Activated T-helper 1 cell treated with anti-CD3 and anti-CD28 coated beads, Interleukin-12 subunit alpha, Interleukin-12 subunit beta, Interleukin-2, Interleukin-4 antibody, amounts not matched to agents 30 ng/mL and 10 ng/mL and 1 ng/mL, durations not matched to agents 14 hours and 24 hours and 36 hours (primary cell): ENCODE measurements at regions of chr3 and their contacts with region 1.

Region 1: DNA sequence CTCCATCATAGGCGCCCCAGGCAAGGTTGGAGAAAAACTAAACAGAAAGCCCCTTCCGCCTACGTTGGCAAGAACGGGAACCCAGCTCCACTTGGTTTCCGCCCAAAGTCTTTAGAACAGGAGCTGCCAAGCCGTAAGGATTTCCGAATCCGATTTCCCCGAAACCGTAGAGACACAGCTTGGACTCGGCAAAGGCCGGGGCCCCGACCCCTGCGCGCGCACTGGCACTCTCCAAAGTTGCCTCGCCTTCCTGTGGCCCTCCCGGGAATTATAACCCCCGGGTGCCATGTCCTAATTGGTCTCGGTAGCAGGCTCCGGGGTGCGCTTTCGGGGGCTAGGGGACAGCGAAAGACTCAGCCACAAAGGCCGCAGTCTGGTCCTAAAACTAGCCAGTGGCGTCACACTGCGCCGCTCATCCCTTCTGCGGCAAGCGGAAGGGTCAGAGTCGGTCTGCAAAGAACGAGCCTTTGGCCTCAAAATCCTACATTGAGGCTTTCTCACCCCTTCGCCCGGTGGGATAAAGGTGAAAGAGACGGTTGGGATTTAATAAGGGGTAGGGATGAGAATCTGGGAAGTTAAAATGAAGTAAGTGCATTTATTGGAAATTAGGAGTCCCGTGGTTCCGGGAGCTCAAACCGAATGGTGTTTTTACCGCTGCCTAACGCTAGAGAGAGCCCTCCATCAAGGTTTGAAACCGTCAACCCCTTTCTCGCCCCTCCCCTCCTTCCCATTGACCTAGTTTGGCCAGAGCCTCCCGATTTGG is 6.8 kb downstream of the BCL6 start:
- DNase-seq: peak; percentile 67
- H3K4me3 Mint-ChIP-seq: peak overlapping the region; percentile 96
- H3K27ac Mint-ChIP-seq: peak overlapping the region; percentile 92
- H3K4me1 Mint-ChIP-seq: peaks cover 71% of the 10 kb centered on the region
- H3K27me3 Mint-ChIP-seq: no peaks in the 10 kb centered on the region

Region 2: GRCh38 chr3:188202358-188203138 is 464.0 kb after region 1 on chr3:
- intact Hi-C with region 1: loop called (anchors 5 kb)
- DNase-seq: peak; percentile 8
- H3K4me3 Mint-ChIP-seq: no peak overlapping the region
- H3K27ac Mint-ChIP-seq: no peak overlapping the region
- H3K4me1 Mint-ChIP-seq: peaks cover 28% of the 10 kb centered on the region
- H3K27me3 Mint-ChIP-seq: no peaks in the 10 kb centered on the region

Region 3: DNA sequence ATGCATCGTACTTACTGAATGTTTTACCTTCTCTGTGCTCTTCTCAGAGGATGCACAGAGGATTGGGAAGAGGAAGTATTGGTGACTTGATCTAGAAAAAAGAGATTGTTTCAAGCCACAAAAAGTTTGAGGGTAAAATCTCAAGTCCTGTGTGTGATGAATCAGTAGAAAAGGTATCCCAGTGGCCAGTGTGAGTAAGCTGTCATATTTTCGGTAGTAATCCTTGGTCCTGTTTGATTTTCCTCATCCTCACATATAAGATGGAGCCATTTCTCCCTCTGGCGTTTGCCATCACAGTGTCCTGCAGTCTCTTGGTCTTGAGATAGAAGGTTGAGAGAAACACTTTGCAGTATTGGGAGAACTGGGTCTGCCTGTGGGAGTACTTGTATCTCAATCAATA is 582.2 kb after region 1 on chr3:
- intact Hi-C with region 1: loop called (anchors 1 kb)
- DNase-seq: no peak
- H3K4me3 Mint-ChIP-seq: no peak overlapping the region
- H3K27ac Mint-ChIP-seq: no peak overlapping the region
- H3K4me1 Mint-ChIP-seq: peaks cover 49% of the 10 kb centered on the region
- H3K27me3 Mint-ChIP-seq: peaks cover 1% of the 10 kb centered on the region

Region 4: DNA sequence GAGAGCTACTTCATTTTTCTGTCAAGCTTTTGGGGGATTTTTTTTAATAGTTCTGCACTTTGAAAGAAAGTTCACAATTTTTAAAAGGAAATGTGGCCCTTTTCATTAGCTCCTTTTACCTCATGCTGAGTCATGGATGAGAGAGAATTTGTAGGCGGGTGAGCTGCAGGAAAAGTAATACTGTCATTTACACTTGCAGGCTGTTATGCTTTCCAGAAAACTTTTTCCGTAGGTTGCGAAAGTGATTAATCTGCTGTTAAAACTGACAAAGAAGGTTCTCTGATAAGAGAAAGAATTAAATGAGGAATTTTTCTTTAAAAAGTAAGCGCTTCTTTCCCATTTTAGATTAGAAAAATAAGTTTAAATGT is 845.6 kb after region 1 on chr3:
- intact Hi-C with region 1: loop called (anchors 2 kb)
- DNase-seq: no peak
- H3K4me3 Mint-ChIP-seq: no peak overlapping the region
- H3K27ac Mint-ChIP-seq: no peak overlapping the region
- H3K4me1 Mint-ChIP-seq: no peaks in the 10 kb centered on the region
- H3K27me3 Mint-ChIP-seq: no peaks in the 10 kb centered on the region

Region 5: GRCh38 chr3:188788621-188789081 is 1050.1 kb after region 1 on chr3:
- intact Hi-C with region 1: loop called (anchors 1 kb)
- DNase-seq: peak; percentile 49
- H3K4me3 Mint-ChIP-seq: no peak overlapping the region
- H3K27ac Mint-ChIP-seq: no peak overlapping the region
- H3K4me1 Mint-ChIP-seq: peaks cover 6% of the 10 kb centered on the region
- H3K27me3 Mint-ChIP-seq: peaks cover 8% of the 10 kb centered on the region

Region 6: GRCh38 chr3:189324538-189325138 is 1586.1 kb after region 1 on chr3:
- intact Hi-C with region 1: loop called (anchors 5 kb)
- DNase-seq: peak; percentile 85
- H3K4me3 Mint-ChIP-seq: peak overlapping the region; percentile 83
- H3K27ac Mint-ChIP-seq: peak overlapping the region; percentile 99
- H3K4me1 Mint-ChIP-seq: peaks cover 72% of the 10 kb centered on the region
- H3K27me3 Mint-ChIP-seq: peaks cover 3% of the 10 kb centered on the region